AG04449 (cell line): ENCODE measurements at regions of chr12 and their contacts with region 1.

Region 1: DNA sequence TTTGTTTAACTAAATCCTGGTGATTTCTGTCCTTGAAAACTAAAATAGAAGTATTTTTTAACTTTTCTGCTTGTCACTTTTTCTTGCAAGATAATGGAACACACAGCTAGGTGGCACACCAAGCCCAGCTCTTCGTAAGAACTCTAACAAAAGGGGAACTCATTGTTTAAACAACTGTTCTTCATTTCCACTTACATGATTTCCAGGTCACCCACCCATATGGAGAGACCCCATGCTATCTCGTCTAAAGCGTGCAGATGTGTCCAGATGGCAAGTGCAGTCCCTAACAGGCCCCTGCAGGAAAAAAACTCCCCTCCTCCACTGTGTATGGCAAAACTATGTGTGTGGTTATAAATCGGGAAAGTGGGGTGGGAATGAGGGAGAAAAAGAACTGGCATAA is 43.3 kb upstream of the NT5DC3 start:
- DNase-seq: no peak
- H3K4me3 ChIP-seq: peak overlapping the region; percentile 24
- CTCF ChIP-seq: peak; percentile 38

Region 2: DNA sequence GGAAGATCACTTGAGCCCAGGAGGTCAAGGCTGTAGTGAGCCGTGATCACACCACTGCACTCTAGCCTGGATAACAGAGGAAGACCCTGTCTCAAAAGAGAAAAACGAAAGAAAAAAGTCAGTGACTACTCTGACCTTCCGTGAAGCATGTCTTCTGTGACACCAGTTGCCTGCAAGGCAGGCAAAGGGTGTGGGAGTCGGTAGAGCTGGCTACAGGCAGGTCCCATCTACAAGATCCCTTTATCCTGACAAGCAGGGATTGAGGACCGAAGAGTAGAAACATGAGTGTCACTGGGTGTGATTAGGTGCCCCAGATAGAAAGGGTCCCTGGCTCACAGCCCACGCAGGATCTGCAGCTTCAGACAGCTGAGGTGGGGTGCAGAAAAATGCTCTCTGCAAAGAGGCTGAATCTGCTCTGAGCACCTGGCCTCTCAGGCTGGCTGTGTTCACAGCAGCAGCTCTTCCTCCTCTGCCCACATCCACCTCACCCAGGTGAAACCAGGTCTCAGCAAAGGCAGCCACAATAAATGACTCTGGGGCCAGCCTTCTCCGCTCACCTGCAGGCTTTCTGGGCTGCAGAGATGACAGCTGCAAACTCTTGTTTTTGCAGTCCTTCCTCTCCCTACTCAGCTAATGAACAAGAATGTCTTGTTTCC is 17.3 kb after region 1 on chr12:
- CTCF ChIA-PET with region 1: interaction called, 33 read pairs
- POLR2A ChIA-PET with region 1: no interaction called
- DNase-seq: no peak
- H3K4me3 ChIP-seq: no peak overlapping the region
- CTCF ChIP-seq: no peak